Activated B cell treated with CpG ODN at 0.5 μM for 24 hours (primary cell): ENCODE measurements at regions of chr11 and their contacts with region 1.

Region 1: DNA sequence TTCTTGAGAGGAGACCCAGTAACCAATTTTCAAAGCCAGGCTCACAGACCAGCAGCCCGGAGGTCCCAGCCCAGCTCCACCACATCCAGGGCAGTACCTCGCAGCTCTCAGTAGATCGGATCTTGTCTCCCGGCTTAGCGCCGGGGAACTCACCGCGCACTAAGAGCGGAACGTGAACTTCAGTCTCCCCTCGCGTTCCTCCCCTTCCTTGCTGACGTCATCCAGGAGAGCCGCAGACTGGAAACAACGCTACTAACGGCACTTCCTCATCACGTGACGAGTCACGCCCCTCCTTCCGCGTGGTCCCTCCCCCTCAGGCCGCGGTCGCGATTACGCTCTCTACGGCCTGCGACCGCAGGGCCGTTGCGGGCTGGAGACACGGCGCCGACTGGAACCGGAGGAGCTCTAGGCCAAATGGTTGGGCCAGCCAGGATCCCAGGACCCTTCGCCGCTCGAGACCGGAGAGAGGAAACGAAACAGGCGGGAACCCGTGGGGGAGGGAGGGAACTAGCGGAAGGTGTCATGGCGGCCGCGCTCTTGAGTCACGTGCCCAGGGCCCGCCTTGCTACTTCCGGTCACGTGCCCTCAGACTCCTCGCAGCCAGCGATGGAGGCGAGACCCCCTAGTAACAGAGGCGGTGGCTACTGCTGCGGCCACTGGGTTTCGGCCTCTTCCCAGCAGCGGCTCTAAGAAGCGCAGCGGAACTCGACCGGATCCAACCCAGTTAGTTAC is at the starts of genes GTF2H1 and HPS5:
- DNase-seq: peak; percentile 93
- ATAC-seq: peak; percentile 87
- H3K4me3 Mint-ChIP-seq: peak within 1 kb of the TSS; percentile 99
- H3K27ac Mint-ChIP-seq: peak within 1 kb of the TSS; percentile 100
- H3K4me1 Mint-ChIP-seq: peaks cover 70% of the 10 kb centered on the region
- H3K27me3 Mint-ChIP-seq: no peaks in the 10 kb centered on the region
- CTCF ChIP-seq: no peak
- total RNA-seq, gene GTF2H1: 60.3 and 71.5 TPM in 2 replicates
- total RNA-seq, gene HPS5: 42.6 and 51.0 TPM in 2 replicates

Region 2: DNA sequence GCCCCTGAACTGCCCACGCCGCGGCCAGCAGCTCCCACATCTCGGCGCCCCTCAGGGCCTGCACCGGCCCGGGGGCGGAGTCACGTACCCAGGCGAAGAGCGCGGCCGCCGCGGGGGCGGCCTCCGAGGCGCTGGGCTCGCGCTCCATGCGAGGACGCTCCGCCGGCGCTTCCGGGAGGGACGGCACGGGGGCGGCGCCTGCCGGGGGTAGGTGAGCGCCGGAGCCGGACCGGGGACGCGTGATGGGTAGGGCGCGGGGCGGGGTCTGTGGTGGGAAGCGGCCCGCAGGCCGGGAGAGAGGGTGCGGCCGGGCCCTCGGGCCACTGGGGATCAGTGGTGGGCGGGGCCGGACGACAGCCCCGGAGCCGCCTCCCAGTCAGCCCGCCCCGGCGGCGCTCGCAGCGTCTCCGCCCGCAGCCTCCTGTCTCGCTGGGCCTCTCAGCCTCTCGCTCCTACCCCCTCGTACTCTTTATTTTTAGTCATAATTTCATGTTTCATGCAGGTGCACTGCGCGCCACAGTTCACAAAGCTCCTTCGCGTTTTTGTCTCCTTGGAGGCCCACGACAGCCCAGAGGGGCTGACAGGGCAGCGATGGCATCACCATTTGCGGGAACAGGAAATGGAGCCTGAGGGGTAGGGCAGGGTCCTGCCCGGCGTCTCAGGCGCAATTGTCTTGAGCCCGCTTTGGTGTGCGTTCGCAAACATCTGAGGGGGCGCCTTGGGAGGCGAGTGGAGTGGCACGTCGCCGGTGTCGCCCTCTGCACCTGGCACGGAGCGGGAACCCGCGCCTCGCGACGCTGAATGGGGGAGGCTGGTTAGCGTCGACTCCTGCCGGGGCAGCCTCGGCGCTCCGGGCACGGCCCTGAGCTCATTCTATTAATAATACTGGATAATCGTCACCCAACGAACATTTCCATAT is 309.0 kb before region 1 on chr11 and contains the start of gene SERGEF:
- CTCF ChIA-PET with region 1: no interaction called
- POLR2A ChIA-PET with region 1: interaction called, 5 read pairs
- intact Hi-C with region 1: loop called (anchors 2 kb)
- DNase-seq: peak; percentile 96
- ATAC-seq: peak; percentile 94
- H3K4me3 Mint-ChIP-seq: peak within 1 kb of the TSS; percentile 100
- H3K27ac Mint-ChIP-seq: peak within 1 kb of the TSS; percentile 99
- H3K4me1 Mint-ChIP-seq: peaks cover 16% of the 10 kb centered on the region
- H3K27me3 Mint-ChIP-seq: no peaks in the 10 kb centered on the region
- CTCF ChIP-seq: no peak
- total RNA-seq, gene SERGEF: 38.4 and 47.4 TPM in 2 replicates

Region 3: GRCh38 chr11:18193010-18193409 is 129.1 kb before region 1 on chr11:
- CTCF ChIA-PET with region 1: no interaction called
- POLR2A ChIA-PET with region 1: no interaction called
- intact Hi-C with region 1: no loop called
- DNase-seq: no peak
- ATAC-seq: no peak
- H3K4me3 Mint-ChIP-seq: no peak overlapping the region
- H3K27ac Mint-ChIP-seq: no peak overlapping the region
- H3K4me1 Mint-ChIP-seq: no peaks in the 10 kb centered on the region
- H3K27me3 Mint-ChIP-seq: peaks cover 7% of the 10 kb centered on the region
- CTCF ChIP-seq: no peak

Region 4: DNA sequence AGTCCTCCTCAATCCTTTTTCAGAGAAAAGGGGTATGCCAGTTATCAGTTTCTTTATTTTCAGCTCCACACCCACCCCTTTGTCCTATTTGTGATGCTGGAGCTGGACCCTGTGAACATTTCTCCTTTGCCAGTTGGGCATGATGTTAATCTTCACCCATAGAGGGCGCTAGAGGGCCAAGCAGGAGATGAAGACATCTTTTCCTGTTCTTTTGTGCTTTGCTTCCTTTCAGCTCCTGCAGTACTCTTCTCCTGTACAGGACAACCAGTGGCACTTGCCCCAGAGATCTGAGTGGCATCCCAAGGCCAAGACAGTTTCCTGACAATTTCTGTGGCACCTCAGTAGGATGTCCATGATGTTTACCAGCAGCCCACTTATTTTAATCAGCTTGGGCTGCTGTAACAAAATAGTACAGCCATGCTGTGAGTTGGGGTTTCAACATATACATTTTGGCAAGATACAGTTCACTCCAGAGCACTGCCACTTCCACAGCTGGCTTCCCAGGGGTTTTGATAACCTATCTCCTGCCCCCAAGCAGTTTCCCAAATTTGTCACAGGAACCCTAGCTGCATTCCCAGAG is 78.3 kb before region 1 on chr11:
- CTCF ChIA-PET with region 1: interaction called, 8 read pairs
- POLR2A ChIA-PET with region 1: interaction called, 3 read pairs
- intact Hi-C with region 1: loop called (anchors 5 kb)
- DNase-seq: no peak
- ATAC-seq: no peak
- H3K4me3 Mint-ChIP-seq: no peak overlapping the region
- H3K27ac Mint-ChIP-seq: no peak overlapping the region
- H3K4me1 Mint-ChIP-seq: peaks cover 15% of the 10 kb centered on the region
- H3K27me3 Mint-ChIP-seq: peaks cover 16% of the 10 kb centered on the region
- CTCF ChIP-seq: no peak

Region 5: DNA sequence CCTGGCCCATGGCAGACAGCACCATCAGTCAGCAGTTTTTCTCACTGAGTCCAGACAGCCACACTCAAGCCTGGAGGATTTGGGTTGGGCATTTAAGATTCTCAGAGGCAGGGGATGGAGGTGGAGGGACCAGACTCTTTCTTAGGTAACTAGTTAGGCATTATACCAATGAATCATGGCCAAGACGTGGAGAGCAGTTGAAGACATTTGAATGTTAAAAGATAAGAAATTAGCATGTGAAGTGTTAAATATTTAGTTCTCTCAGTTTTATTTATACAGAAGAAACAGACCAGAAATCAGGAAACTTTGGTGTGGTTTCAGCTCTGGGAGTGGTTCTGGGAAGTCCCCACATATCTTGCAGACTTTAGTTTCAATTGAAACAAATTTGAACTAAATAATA is 10.2 kb after region 1 on chr11:
- CTCF ChIA-PET with region 1: no interaction called
- POLR2A ChIA-PET with region 1: interaction called, 15 read pairs
- intact Hi-C with region 1: no loop called
- DNase-seq: no peak
- ATAC-seq: peak; percentile 39
- H3K4me3 Mint-ChIP-seq: peak overlapping the region; percentile 66
- H3K27ac Mint-ChIP-seq: peak overlapping the region; percentile 88
- H3K4me1 Mint-ChIP-seq: peaks cover 42% of the 10 kb centered on the region
- H3K27me3 Mint-ChIP-seq: no peaks in the 10 kb centered on the region
- CTCF ChIP-seq: no peak

Region 6: DNA sequence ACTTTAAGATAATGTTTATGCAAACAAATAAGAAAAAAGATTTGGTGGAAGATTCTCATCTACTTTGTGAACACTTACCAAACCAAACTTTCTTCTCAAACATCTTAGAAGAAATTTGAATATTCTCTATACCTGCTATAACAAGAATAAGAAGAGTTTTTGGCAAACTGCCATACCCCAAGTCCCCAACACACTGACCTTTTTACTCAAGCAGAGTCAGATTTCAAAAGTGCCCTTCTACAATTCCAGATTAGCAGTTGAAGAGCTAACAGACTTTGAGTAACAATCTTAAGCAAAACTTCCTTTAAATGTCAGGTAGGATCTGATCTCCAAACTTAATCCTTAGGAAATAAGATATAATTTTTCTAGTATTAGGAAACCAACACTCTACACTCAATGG is 170.7 kb after region 1 on chr11:
- CTCF ChIA-PET with region 1: no interaction called
- POLR2A ChIA-PET with region 1: no interaction called
- intact Hi-C with region 1: loop called (anchors 10 kb)
- DNase-seq: no peak
- ATAC-seq: no peak
- H3K4me3 Mint-ChIP-seq: no peak overlapping the region
- H3K27ac Mint-ChIP-seq: no peak overlapping the region
- H3K4me1 Mint-ChIP-seq: peaks cover 14% of the 10 kb centered on the region
- H3K27me3 Mint-ChIP-seq: no peaks in the 10 kb centered on the region
- CTCF ChIP-seq: no peak